Prostate gland (tissue), 2 donors: ENCODE measurements at regions of chr12 and their contacts with region 1.

Region 1: GRCh38 chr12:117587631-117588287 is 226.3 kb upstream of the NOS1 start:
- DNase-seq: peak; percentile 50
- H3K4me3 ChIP-seq: no peak overlapping the region
- H3K27ac ChIP-seq: no peak overlapping the region
- H3K4me1 ChIP-seq: no peaks in the 10 kb centered on the region
- H3K27me3 ChIP-seq: no peaks in the 10 kb centered on the region
- CTCF ChIP-seq: peak; percentile 60 to 89 (median 82)
- POLR2A ChIP-seq: no peak

Region 2: GRCh38 chr12:117236456-117237001 is 351.2 kb before region 1 on chr12:
- intact Hi-C with region 1: loop called (anchors 10 kb)
- DNase-seq: peak; percentile 84
- H3K4me3 ChIP-seq: no peak overlapping the region
- H3K27ac ChIP-seq: no peak overlapping the region
- H3K4me1 ChIP-seq: no peaks in the 10 kb centered on the region
- H3K27me3 ChIP-seq: no peaks in the 10 kb centered on the region
- CTCF ChIP-seq: peak; percentile 61 to 85 (median 70)
- POLR2A ChIP-seq: no peak